ENCODE measurements at regions of chr20 and their contacts with region 1.

Region 1: DNA sequence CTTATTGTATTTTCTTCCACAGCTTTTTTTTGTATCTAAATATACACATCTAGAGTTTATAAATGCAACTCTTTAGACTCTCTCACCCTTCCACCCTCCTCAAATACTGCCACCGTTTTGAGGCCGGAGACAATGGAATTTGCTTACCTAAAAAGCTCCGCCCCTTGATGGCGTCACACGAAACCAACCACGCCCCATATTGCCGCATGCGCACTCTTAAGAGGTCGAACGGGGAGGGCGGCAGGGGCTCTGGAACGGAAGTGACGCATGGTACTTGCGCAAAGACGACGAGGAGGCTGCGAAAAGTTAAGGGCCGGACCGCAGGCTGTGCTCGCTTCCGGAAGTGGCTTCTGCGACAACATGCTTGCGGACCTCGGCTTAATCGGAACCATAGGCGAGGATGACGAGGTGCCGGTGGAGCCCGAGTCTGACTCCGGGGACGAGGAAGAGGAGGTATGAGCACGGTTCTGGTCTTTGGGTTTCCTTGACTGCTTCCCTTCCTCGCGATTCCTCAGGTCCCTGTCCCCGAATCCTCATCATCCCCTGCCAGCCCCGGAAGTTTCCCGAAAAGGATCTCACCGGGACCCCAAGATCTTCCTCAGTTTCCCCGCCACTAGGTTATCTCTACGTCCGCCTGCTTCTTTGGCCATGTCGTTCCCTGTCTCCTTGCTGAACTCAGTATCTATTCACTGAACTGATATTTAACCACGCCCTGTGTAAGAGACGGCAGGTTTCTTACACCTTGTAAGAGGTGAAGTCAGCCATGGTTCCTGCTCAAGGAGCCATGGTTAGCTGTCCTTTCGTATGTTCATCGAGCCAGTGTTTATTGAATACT is at the start of gene DDX27:
- DNase-seq: peak; percentile 99
- ATAC-seq: peak; percentile 86
- H3K4me3 ChIP-seq: peak within 1 kb of the TSS; percentile 68 to 98 (median 82)
- H3K4me3 Mint-ChIP-seq: peak within 1 kb of the TSS; percentile 90
- H3K27ac ChIP-seq: peak within 1 kb of the TSS; percentile 95 to 97
- H3K27ac Mint-ChIP-seq: peak within 1 kb of the TSS; percentile 93
- H3K4me1 ChIP-seq: peaks cover 16 to 26% of the 10 kb centered on the region in 2 donors
- H3K4me1 Mint-ChIP-seq: peaks cover 24% of the 10 kb centered on the region
- H3K27me3 ChIP-seq: no peaks in the 10 kb centered on the region
- H3K27me3 Mint-ChIP-seq: no peaks in the 10 kb centered on the region
- CTCF ChIP-seq: no peak
- total RNA-seq, gene DDX27: 74.6 and 75.3 TPM in 2 replicates

Region 2: GRCh38 chr20:48921151-48921898 is 298.0 kb before region 1 on chr20 and contains the start of gene ARFGEF2:
- CTCF ChIA-PET with region 1: interaction called, 3 read pairs
- POLR2A ChIA-PET with region 1: no interaction called
- intact Hi-C with region 1: loop called (anchors 5 kb)
- DNase-seq: peak; percentile 96
- ATAC-seq: peak; percentile 92
- H3K4me3 ChIP-seq: peak within 1 kb of the TSS; percentile 59 to 91 (median 86)
- H3K4me3 Mint-ChIP-seq: peak within 1 kb of the TSS; percentile 96
- H3K27ac ChIP-seq: peak within 1 kb of the TSS; percentile 88 to 91
- H3K27ac Mint-ChIP-seq: peak within 1 kb of the TSS; percentile 95
- H3K4me1 ChIP-seq: peaks cover 47 to 55% of the 10 kb centered on the region in 2 donors
- H3K4me1 Mint-ChIP-seq: peaks cover 49% of the 10 kb centered on the region
- H3K27me3 ChIP-seq: no peaks in the 10 kb centered on the region
- H3K27me3 Mint-ChIP-seq: no peaks in the 10 kb centered on the region
- CTCF ChIP-seq: no peak
- total RNA-seq, gene ARFGEF2: 34.3 and 41.3 TPM in 2 replicates

Region 3: GRCh38 chr20:49138431-49138830 is 80.9 kb before region 1 on chr20:
- CTCF ChIA-PET with region 1: interaction called, 149 read pairs
- POLR2A ChIA-PET with region 1: no interaction called
- intact Hi-C with region 1: no loop called
- DNase-seq: no peak
- ATAC-seq: no peak
- H3K4me3 ChIP-seq: no peak overlapping the region
- H3K4me3 Mint-ChIP-seq: no peak overlapping the region
- H3K27ac ChIP-seq: no peak overlapping the region
- H3K27ac Mint-ChIP-seq: no peak overlapping the region
- H3K4me1 ChIP-seq: peaks cover 0 to 4% of the 10 kb centered on the region in 2 donors
- H3K4me1 Mint-ChIP-seq: peaks cover 9% of the 10 kb centered on the region
- H3K27me3 ChIP-seq: no peaks in the 10 kb centered on the region
- H3K27me3 Mint-ChIP-seq: no peaks in the 10 kb centered on the region
- CTCF ChIP-seq: no peak

Region 4: GRCh38 chr20:49207076-49207475 is 12.2 kb before region 1 on chr20:
- CTCF ChIA-PET with region 1: interaction called, 11 read pairs
- POLR2A ChIA-PET with region 1: no interaction called
- intact Hi-C with region 1: no loop called
- DNase-seq: no peak
- ATAC-seq: no peak
- H3K4me3 ChIP-seq: no peak overlapping the region
- H3K4me3 Mint-ChIP-seq: no peak overlapping the region
- H3K27ac ChIP-seq: no peak overlapping the region
- H3K27ac Mint-ChIP-seq: no peak overlapping the region
- H3K4me1 ChIP-seq: no peaks in the 10 kb centered on the region
- H3K4me1 Mint-ChIP-seq: no peaks in the 10 kb centered on the region
- H3K27me3 ChIP-seq: peaks cover 0 to 2% (median 0%) of the 10 kb centered on the region in 4 experiments
- H3K27me3 Mint-ChIP-seq: no peaks in the 10 kb centered on the region
- CTCF ChIP-seq: no peak

Region 5: DNA sequence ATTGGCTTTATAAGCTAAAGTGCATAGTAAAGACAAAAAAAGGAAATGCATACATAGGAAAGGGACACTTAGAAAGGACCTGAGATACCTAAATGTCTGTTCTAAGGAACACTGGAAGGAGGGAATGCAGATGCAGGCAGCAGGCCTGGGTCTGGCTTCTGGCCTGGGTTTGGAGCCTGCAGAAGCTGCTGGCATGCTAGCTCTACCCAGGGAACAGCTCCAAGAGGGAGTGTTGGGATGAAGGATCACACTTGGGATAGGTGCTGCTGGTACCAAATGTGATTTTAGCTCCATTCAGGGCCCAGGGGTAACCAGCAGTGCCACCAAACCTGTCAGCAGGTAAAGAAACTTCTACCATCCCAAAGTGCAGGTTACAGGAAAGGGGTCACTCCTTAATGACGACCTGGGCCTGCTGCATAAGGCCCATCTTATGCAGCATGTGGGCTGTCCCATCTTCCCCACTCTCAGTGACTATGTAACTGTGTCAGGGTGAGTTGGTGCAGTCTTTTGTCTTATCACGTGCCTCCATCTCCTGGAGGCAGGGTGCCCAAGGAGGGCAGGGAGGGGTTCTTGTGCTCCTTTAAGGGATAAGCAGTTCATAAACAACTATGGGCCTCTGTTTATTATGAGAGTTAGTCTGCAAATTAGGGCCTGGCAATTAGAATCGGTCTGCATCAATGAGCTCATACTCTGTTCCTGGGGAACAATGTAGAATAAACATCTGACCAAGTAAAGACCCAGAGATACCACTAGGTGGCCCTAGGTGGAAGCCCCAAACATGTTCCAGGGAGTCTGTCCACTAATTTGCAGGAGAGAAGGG is 26.8 kb after region 1 on chr20:
- CTCF ChIA-PET with region 1: interaction called, 10 read pairs
- POLR2A ChIA-PET with region 1: no interaction called
- intact Hi-C with region 1: no loop called
- DNase-seq: peak; percentile 57
- ATAC-seq: peak; percentile 60
- H3K4me3 ChIP-seq: no peak overlapping the region
- H3K4me3 Mint-ChIP-seq: no peak overlapping the region
- H3K27ac ChIP-seq: no peak overlapping the region
- H3K27ac Mint-ChIP-seq: peak overlapping the region; percentile 64
- H3K4me1 ChIP-seq: no peaks in the 10 kb centered on the region
- H3K4me1 Mint-ChIP-seq: peaks cover 3% of the 10 kb centered on the region
- H3K27me3 ChIP-seq: no peaks in the 10 kb centered on the region
- H3K27me3 Mint-ChIP-seq: no peaks in the 10 kb centered on the region
- CTCF ChIP-seq: peak; percentile 64

Region 6: DNA sequence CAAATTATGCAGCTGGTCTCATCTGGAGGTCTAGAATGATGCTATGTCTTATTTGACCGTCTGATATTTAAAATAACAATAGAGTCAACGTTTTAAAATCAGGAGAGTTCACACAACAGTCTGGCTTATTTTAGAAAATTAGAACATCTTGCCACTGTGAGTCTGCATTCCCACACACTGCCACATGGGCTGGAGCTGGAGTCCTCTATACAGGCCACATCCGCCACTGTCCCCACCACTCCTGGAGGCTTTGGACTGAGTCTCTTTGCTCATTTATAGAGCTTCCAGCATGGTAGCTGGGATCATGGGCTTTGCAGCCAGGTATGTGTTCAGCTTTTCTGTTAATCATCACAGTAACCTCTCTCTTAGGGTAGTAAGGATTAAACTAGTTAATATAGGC is 127.4 kb after region 1 on chr20:
- CTCF ChIA-PET with region 1: no interaction called
- POLR2A ChIA-PET with region 1: no interaction called
- intact Hi-C with region 1: no loop called
- DNase-seq: no peak
- ATAC-seq: no peak
- H3K4me3 ChIP-seq: no peak overlapping the region
- H3K4me3 Mint-ChIP-seq: no peak overlapping the region
- H3K27ac ChIP-seq: no peak overlapping the region
- H3K27ac Mint-ChIP-seq: no peak overlapping the region
- H3K4me1 ChIP-seq: no peaks in the 10 kb centered on the region
- H3K4me1 Mint-ChIP-seq: no peaks in the 10 kb centered on the region
- H3K27me3 ChIP-seq: peaks cover 0 to 5% (median 2%) of the 10 kb centered on the region in 4 experiments
- H3K27me3 Mint-ChIP-seq: peaks cover 28% of the 10 kb centered on the region
- CTCF ChIP-seq: no peak

Region 7: DNA sequence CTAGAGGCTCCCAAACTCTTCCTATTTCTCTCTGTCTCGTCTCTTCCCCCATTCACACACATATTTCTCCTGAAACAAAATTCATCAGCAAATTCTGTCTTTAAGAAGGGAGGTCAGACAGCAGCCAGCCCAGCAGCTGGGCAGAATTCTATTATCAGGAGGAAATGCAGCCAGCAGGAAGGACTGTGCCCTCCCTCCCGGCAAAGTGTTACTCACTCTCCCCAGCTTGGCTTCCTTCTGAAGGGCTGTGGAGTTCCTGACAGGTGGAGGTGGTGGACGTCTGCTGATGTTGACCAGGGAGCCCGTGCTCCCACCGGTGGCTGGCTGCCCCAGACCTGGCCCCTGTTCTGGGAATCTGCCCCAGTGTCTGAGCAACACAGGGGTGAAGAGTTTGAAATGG is 225.9 kb after region 1 on chr20:
- CTCF ChIA-PET with region 1: no interaction called
- POLR2A ChIA-PET with region 1: no interaction called
- intact Hi-C with region 1: no loop called
- DNase-seq: no peak
- ATAC-seq: no peak
- H3K4me3 ChIP-seq: no peak overlapping the region
- H3K4me3 Mint-ChIP-seq: no peak overlapping the region
- H3K27ac ChIP-seq: no peak overlapping the region
- H3K27ac Mint-ChIP-seq: no peak overlapping the region
- H3K4me1 ChIP-seq: no peaks in the 10 kb centered on the region
- H3K4me1 Mint-ChIP-seq: no peaks in the 10 kb centered on the region
- H3K27me3 ChIP-seq: peaks cover 0 to 18% (median 2%) of the 10 kb centered on the region in 4 experiments
- H3K27me3 Mint-ChIP-seq: peaks cover 46% of the 10 kb centered on the region
- CTCF ChIP-seq: no peak